ENCODE measurements at regions of chr11 and their contacts with region 1.

Region 1: DNA sequence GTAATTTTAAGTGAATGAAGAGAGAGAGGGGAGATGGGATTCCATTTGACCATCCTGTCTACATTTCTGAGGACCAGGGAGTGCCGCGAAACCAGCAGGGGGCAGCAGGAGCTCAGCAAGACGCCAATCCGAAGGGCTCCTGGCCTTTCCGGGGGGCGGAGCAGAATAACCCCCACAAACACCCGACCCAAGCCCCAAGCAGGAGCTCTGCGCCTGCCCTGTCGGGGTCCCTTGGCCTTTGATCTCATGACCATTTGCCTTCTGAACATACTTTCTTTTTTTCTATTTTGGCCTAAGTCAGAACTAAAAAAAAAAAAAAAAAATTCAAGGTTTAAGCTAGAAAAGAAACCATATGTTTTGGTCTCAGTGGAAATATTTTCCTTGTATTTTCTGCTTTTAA is 21.9 kb upstream of the SCN2B start:
- DNase-seq: peak; percentile 67
- H3K4me3 Mint-ChIP-seq: peak overlapping the region; percentile 21
- H3K27ac Mint-ChIP-seq: peak overlapping the region; percentile 81
- H3K4me1 Mint-ChIP-seq: peaks cover 13% of the 10 kb centered on the region
- H3K27me3 Mint-ChIP-seq: no peaks in the 10 kb centered on the region

Region 2: GRCh38 chr11:118046051-118046963 is 152.1 kb before region 1 on chr11:
- intact Hi-C with region 1: loop called (anchors 5 kb)
- DNase-seq: peak; percentile 12
- H3K4me3 Mint-ChIP-seq: peak overlapping the region; percentile 52
- H3K27ac Mint-ChIP-seq: peak overlapping the region; percentile 93
- H3K4me1 Mint-ChIP-seq: peaks cover 86% of the 10 kb centered on the region
- H3K27me3 Mint-ChIP-seq: no peaks in the 10 kb centered on the region

Region 3: DNA sequence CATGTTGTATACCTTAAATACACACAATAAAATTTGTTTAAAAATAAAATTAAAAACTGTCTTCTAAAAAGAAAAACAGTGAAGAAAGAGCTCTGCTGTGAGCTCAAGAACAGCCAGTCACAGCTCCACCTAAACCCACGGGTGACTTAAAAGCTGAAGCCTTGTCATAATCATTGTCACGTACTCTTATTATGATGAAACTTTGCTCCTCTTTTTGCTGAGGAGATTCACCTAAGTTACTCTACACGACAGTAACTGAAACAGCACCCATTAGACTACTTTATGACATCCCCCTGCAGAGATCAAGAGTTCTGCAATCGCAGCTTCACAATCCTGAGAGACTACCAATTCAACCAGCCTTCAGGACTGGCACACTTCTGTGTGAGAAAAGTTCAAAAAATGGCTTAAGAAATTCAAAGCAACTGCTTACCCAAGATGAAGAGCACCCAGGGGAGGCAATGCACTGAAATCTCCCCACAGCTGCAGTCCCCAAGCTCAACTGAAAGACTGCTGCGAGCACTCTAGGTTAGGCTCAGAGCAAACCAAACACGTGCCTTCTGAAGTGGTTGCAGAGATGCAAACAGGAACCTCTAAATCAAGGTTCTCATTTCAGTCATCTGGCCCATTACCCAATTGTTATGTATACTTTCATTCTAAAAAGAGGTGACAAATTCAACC is 26.3 kb after region 1 on chr11 and contains the start of gene JAML:
- intact Hi-C with region 1: loop called (anchors 1 kb)
- DNase-seq: peak; percentile 67
- H3K4me3 Mint-ChIP-seq: peak within 1 kb of the TSS; percentile 88
- H3K27ac Mint-ChIP-seq: peak within 1 kb of the TSS; percentile 98
- H3K4me1 Mint-ChIP-seq: peaks cover 58% of the 10 kb centered on the region
- H3K27me3 Mint-ChIP-seq: no peaks in the 10 kb centered on the region
- total RNA-seq, gene JAML: 264 and 271 TPM in 2 replicates

Region 4: GRCh38 chr11:118251858-118252652 is 53.7 kb after region 1 on chr11 and contains the start of gene MPZL3:
- intact Hi-C with region 1: loop called (anchors 1 kb)
- DNase-seq: peak; percentile 71
- H3K4me3 Mint-ChIP-seq: peak within 1 kb of the TSS; percentile 96
- H3K27ac Mint-ChIP-seq: peak within 1 kb of the TSS; percentile 97
- H3K4me1 Mint-ChIP-seq: peaks cover 51% of the 10 kb centered on the region
- H3K27me3 Mint-ChIP-seq: no peaks in the 10 kb centered on the region
- total RNA-seq, gene MPZL3: 63.5 and 69.3 TPM in 2 replicates

Region 5: DNA sequence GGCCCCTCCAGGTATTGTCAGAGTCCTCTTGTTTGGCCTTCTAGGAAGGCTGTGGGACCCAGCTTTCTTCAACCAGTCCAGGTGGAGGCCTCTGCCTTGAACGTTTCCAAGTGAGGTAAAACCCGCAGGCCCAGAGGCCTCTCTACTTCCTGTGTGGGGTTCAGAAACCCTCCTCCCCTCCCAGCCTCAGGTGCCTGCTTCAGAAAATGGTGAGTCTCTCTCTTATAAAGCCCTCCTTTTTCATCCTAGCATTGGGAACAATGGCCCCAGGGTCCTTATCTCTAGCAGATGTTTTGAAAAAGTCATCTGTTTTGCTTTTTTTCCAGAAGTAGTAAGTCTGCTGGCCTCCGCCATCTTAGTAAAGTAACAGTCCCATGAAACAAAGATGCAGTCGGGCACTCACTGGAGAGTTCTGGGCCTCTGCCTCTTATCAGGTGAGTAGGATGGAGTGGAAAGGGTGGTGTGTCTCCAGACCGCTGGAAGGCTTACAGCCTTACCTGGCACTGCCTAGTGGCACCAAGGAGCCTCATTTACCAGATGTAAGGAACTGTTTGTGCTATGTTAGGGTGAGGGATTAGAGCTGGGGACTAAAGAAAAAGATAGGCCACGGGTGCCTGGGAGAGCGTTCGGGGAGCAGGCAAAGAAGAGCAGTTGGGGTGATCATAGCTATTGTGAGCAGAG is 106.3 kb after region 1 on chr11 and contains the start of gene CD3E:
- intact Hi-C with region 1: loop called (anchors 1 kb)
- DNase-seq: peak; percentile 60
- H3K4me3 Mint-ChIP-seq: peak within 1 kb of the TSS; percentile 99
- H3K27ac Mint-ChIP-seq: peak within 1 kb of the TSS; percentile 98
- H3K4me1 Mint-ChIP-seq: peaks cover 62% of the 10 kb centered on the region
- H3K27me3 Mint-ChIP-seq: no peaks in the 10 kb centered on the region
- total RNA-seq, gene CD3E: 630 and 646 TPM in 2 replicates

Region 6: DNA sequence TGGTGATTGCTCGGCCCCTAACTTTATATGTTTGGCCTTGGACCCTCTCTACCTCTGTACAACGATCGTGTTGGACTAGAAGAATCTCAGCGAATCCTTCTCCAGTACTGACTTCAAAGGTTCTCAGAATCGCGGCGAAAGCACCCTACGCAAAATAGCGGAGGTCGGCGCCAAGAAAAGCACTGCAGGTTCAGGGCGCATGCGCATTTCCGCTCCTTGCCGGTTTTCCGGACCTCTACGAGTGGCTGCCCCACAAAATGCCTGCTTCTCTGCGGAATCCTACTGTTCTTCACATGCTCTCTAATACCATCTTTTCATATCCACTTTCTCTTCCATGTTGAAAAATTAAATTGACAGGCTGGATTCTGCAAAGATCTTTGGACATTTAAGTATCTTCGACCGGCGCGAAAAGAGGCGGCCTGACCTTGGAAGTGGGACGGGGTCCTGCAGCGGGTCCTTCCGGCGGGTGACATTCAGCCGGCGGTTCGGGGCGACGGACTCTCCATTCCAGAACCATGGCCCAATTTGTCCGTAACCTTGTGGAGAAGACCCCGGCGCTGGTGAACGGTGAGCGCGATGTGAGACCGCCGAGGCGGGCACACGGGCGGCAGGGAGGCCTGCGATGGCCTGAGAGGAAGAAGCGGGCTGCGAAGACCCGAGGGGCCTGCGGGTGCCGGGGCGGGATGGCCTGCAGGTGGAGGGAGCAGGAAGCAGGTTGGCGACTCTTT is 202.9 kb after region 1 on chr11 and contains the start of gene ATP5MG:
- intact Hi-C with region 1: loop called (anchors 2 kb)
- DNase-seq: peak; percentile 87
- H3K4me3 Mint-ChIP-seq: peak within 1 kb of the TSS; percentile 93
- H3K27ac Mint-ChIP-seq: peak within 1 kb of the TSS; percentile 96
- H3K4me1 Mint-ChIP-seq: peaks cover 68% of the 10 kb centered on the region
- H3K27me3 Mint-ChIP-seq: no peaks in the 10 kb centered on the region
- total RNA-seq, gene ATP5MG: 205 and 216 TPM in 2 replicates

Region 7: GRCh38 chr11:118572061-118572980 is 374.0 kb after region 1 on chr11 and contains the start of gene ARCN1:
- intact Hi-C with region 1: loop called (anchors 5 kb)
- DNase-seq: peak; percentile 69
- H3K4me3 Mint-ChIP-seq: peak within 1 kb of the TSS; percentile 98
- H3K27ac Mint-ChIP-seq: peak within 1 kb of the TSS; percentile 96
- H3K4me1 Mint-ChIP-seq: peaks cover 51% of the 10 kb centered on the region
- H3K27me3 Mint-ChIP-seq: no peaks in the 10 kb centered on the region
- total RNA-seq, gene ARCN1: 162 and 165 TPM in 2 replicates